Activated T-helper 1 cell treated with anti-CD3 and anti-CD28 coated beads, Interleukin-12 subunit alpha, Interleukin-12 subunit beta, Interleukin-2, Interleukin-4 antibody, amounts not matched to agents 30 ng/mL and 10 ng/mL and 1 ng/mL, durations not matched to agents 14 hours and 24 hours and 36 hours (primary cell): ENCODE measurements at regions of chr22 and their contacts with region 1.

Region 1: GRCh38 chr22:30221121-30221992 is 25.2 kb downstream of the LIF start:
- DNase-seq: peak; percentile 61
- H3K4me3 Mint-ChIP-seq: peak overlapping the region; percentile 65
- H3K27ac Mint-ChIP-seq: peak overlapping the region; percentile 89
- H3K4me1 Mint-ChIP-seq: peaks cover 74% of the 10 kb centered on the region
- H3K27me3 Mint-ChIP-seq: no peaks in the 10 kb centered on the region

Region 2: DNA sequence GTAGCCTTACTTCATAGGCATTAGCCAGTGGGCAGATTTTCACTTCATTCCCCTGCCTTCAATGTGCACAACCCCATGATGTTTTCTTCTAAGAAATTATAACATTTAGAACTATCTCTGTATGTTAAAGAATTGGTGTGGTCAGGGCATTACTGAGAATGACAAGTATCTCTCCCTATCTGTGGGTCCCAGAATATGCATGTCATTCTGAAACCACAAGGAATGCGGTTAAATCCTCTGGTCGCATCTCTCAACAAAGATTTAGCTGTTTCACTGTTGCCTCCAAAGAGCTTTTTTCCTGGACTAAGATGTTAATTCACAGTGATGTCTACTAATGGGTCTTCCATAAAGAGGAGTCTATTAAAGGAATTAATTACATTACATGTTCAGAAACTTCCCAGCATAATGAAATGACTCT is 37.5 kb before region 1 on chr22:
- intact Hi-C with region 1: loop called (anchors 2 kb)
- DNase-seq: peak; percentile 25
- H3K4me3 Mint-ChIP-seq: peak overlapping the region; percentile 69
- H3K27ac Mint-ChIP-seq: peak overlapping the region; percentile 95
- H3K4me1 Mint-ChIP-seq: peaks cover 96% of the 10 kb centered on the region
- H3K27me3 Mint-ChIP-seq: no peaks in the 10 kb centered on the region

Region 3: DNA sequence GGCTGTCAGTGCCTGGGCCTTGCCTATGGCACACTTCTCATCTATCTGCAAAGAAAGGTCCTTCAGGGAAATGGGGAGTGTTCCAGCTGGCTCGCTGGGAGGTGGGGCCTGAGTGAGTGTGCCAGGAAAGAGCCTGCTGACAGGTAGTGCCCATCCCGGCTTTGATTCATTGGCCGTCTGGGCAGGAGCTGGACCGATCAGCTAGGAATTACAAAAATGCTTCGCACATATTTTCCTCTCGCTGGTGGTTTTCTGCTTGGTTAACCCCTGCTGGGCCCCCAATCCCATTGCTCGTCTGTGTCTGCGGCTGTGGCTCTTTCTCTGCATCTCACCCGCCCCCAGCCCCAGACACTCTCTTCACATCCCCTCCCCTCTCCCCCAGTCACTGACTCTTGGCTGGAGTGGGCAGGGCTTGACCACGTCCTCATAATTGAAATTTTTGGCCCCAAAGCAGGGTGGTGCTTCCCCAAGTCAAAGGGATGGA is 14.4 kb after region 1 on chr22:
- intact Hi-C with region 1: no loop called
- DNase-seq: no peak
- H3K4me3 Mint-ChIP-seq: no peak overlapping the region
- H3K27ac Mint-ChIP-seq: no peak overlapping the region
- H3K4me1 Mint-ChIP-seq: peaks cover 28% of the 10 kb centered on the region
- H3K27me3 Mint-ChIP-seq: no peaks in the 10 kb centered on the region